Breast epithelium (tissue), 4 donors: ENCODE measurements at regions of chr17 and their contacts with region 1.

Region 1: GRCh38 chr17:64145757-64146417 is 15.9 kb upstream of the ERN1 start:
- DNase-seq: peak; percentile 97 to 99
- H3K4me3 ChIP-seq: peak overlapping the region; percentile 73 to 82 (median 81)
- H3K27ac ChIP-seq: peak overlapping the region; percentile 94 to 97
- H3K4me1 ChIP-seq: peaks cover 3 to 10% of the 10 kb centered on the region in 2 donors
- H3K27me3 ChIP-seq: no peaks in the 10 kb centered on the region
- CTCF ChIP-seq: peak; percentile 16 to 44 (median 24)
- POLR2A ChIP-seq: peak; percentile 99

Region 2: GRCh38 chr17:64221679-64222078 is 75.8 kb after region 1 on chr17:
- intact Hi-C with region 1: loop called (anchors 2 kb)
- DNase-seq: no peak
- H3K4me3 ChIP-seq: no peak overlapping the region
- H3K27ac ChIP-seq: no peak overlapping the region
- H3K4me1 ChIP-seq: peaks cover 3 to 9% of the 10 kb centered on the region in 2 donors
- H3K27me3 ChIP-seq: no peaks in the 10 kb centered on the region
- CTCF ChIP-seq: no peak
- POLR2A ChIP-seq: no peak

Region 3: GRCh38 chr17:64262417-64263260 is 116.8 kb after region 1 on chr17 and contains the start of gene TEX2:
- intact Hi-C with region 1: loop called (anchors 10 kb)
- DNase-seq: peak; percentile 51 to 63
- H3K4me3 ChIP-seq: peak within 1 kb of the TSS; percentile 87 to 99 (median 97)
- H3K27ac ChIP-seq: peak within 1 kb of the TSS; percentile 89 to 96
- H3K4me1 ChIP-seq: peaks cover 5 to 9% of the 10 kb centered on the region in 2 donors
- H3K27me3 ChIP-seq: no peaks in the 10 kb centered on the region
- CTCF ChIP-seq: no peak
- POLR2A ChIP-seq: no peak
- total RNA-seq, gene TEX2: 47.5 to 70.7 (median 69.6) TPM